ENCODE measurements at regions of chr15 and their contacts with region 1.

Region 1: GRCh38 chr15:69058830-69059556 is 44.5 kb downstream of the NOX5 start:
- DNase-seq: peak; percentile 82
- ATAC-seq: peak; percentile 53
- H3K4me3 Mint-ChIP-seq: no peak overlapping the region
- H3K27ac Mint-ChIP-seq: peak overlapping the region; percentile 13
- H3K4me1 Mint-ChIP-seq: peaks cover 22% of the 10 kb centered on the region
- H3K27me3 Mint-ChIP-seq: peaks cover 2% of the 10 kb centered on the region

Region 2: DNA sequence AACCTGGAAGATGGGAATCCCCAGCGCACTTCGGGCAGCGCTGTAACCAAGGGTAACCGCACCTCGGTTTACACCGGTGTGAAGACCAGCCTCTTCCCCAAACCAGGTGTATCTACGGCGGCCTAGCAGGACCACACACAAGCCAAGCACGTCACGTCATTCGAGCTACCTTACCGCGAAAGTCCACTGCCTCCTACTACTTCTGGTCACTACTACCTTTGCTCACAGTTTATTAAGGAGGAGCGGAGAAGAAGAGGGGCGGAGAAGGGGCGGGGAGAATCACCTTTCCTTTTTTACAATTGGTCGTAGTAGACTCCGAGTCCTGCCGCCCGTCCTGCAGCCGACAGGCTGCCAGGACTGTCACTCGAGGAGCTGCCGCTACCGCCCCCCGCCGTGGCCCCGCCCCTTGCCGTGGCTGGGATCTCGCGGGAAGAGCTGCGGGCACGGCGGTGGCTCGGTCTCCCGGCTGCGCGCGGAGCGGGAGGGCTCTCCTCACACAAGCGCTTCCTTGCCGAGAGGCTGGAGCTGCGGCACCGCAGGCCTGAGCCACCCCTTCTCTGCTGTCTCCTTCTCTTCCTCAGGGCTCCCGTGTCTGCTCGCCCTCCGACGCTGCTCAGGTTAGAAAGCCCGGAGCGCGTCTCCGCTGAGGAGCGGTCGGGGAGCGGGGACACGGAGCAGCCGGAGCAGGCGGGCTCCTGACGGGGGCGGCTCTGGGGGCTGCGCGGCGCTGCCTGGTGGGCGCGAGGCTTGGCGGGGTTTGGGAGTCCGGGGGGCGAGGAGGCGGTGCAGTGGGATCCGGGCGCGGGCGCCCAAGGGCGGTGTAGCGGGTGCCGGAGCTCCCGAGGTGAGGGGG is 101.4 kb after region 1 on chr15 and contains the start of gene GLCE:
- CTCF ChIA-PET with region 1: interaction called, 11 read pairs
- POLR2A ChIA-PET with region 1: no interaction called
- DNase-seq: peak; percentile 93
- ATAC-seq: peak; percentile 97
- H3K4me3 Mint-ChIP-seq: peak within 1 kb of the TSS; percentile 90
- H3K27ac Mint-ChIP-seq: peak within 1 kb of the TSS; percentile 62
- H3K4me1 Mint-ChIP-seq: peaks cover 12% of the 10 kb centered on the region
- H3K27me3 Mint-ChIP-seq: peaks cover 34% of the 10 kb centered on the region
- total RNA-seq, gene GLCE: 3.1 to 3.2 TPM

Region 3: DNA sequence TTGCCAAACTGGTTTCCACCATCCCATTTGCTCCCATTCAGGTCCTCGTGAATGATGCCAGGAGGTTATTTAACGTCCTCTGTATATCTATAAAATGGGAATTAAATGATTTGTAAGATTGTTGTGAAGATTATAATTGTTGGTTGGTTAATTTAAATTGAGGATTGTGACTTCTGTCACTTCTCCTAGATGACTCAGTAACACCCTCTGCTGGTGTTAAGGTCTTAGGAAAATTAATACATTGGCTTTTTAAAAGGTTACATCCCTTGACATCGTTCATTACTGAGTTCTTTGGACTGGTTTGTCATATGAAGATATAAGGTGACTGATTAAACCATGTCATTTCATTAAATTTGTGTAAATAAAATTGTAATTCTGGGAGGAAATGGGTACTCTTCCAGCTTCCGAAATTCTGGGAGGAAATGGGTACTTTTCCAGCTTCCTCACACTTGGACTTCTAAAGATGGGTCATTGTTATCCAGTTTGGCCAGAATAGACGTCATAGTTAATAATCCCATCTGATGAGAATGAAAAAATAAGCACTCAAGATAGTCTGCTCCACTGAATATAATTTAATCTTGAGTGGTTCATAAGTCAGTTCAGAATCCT is 206.5 kb after region 1 on chr15:
- CTCF ChIA-PET with region 1: interaction called, 29 read pairs
- POLR2A ChIA-PET with region 1: no interaction called
- DNase-seq: no peak
- ATAC-seq: no peak
- H3K4me3 Mint-ChIP-seq: no peak overlapping the region
- H3K27ac Mint-ChIP-seq: no peak overlapping the region
- H3K4me1 Mint-ChIP-seq: no peaks in the 10 kb centered on the region
- H3K27me3 Mint-ChIP-seq: no peaks in the 10 kb centered on the region

Region 4: GRCh38 chr15:69394556-69395282 is 335.7 kb after region 1 on chr15:
- CTCF ChIA-PET with region 1: interaction called, 27 read pairs
- POLR2A ChIA-PET with region 1: no interaction called
- DNase-seq: peak; percentile 86
- ATAC-seq: peak; percentile 94
- H3K4me3 Mint-ChIP-seq: no peak overlapping the region
- H3K27ac Mint-ChIP-seq: no peak overlapping the region
- H3K4me1 Mint-ChIP-seq: peaks cover 17% of the 10 kb centered on the region
- H3K27me3 Mint-ChIP-seq: peaks cover 6% of the 10 kb centered on the region